ENCODE measurements at regions of chr2 and their contacts with region 1.

Region 1: GRCh38 chr2:156400706-156401678 is 35.2 kb upstream of the GPD2 start:
- DNase-seq: peak; percentile 56 to 82
- ATAC-seq: peak; percentile 82 to 89
- H3K4me3 ChIP-seq: peak overlapping the region; percentile 47
- H3K27ac ChIP-seq: peak overlapping the region; percentile 75 to 89
- H3K4me1 ChIP-seq: peaks cover 32% of the 10 kb centered on the region
- CTCF ChIP-seq: no peak; the same call in 2 of the 3 replicates
- EP300 ChIP-seq: no peak
- POLR2A ChIP-seq: no peak
- RAD21 ChIP-seq: peak in 1 of 2 experiments; percentile 6; a peak in 1 of 5 replicates

Region 2: DNA sequence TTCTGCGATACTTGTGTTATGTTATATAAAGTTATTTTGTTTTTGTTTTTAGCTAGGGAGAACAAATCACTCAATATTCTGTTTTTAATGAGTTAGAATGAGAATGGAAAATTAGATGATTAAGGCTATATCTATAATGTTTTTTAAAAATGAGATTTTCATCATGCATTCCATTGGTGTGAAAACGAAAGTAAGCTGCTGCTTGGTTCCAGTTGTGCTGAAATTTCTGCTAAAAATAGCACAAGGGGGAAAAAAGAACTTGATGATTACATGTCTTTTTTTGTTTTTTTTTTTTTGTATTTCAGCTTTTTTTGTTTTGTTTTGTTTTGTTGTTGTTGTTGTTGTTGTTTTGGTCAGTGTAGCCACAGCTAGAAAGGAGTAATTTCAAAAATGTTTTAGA is 1945.1 kb before region 1 on chr2:
- CTCF ChIA-PET with region 1: no interaction called
- POLR2A ChIA-PET with region 1: interaction called, 10 read pairs
- DNase-seq: no peak
- ATAC-seq: no peak
- H3K4me3 ChIP-seq: no peak overlapping the region
- H3K27ac ChIP-seq: no peak overlapping the region
- H3K4me1 ChIP-seq: 0 out of 3 replicates have a peak, but pooled peaks cover 7% of the 10 kb centered on the region
- CTCF ChIP-seq: no peak
- EP300 ChIP-seq: no peak
- POLR2A ChIP-seq: no peak
- RAD21 ChIP-seq: no peak

Region 3: GRCh38 chr2:156332534-156333273 is 68.3 kb before region 1 on chr2 and contains the start of gene NR4A2:
- CTCF ChIA-PET with region 1: interaction called, 10 read pairs
- POLR2A ChIA-PET with region 1: interaction called, 17 read pairs
- DNase-seq: peak; percentile 80 to 93
- ATAC-seq: peak; percentile 69 to 82
- H3K4me3 ChIP-seq: peak within 1 kb of the TSS; percentile 87
- H3K27ac ChIP-seq: peak within 1 kb of the TSS; percentile 98
- H3K4me1 ChIP-seq: peaks cover 30% of the 10 kb centered on the region
- CTCF ChIP-seq: no peak
- EP300 ChIP-seq: no peak
- POLR2A ChIP-seq: peak; percentile 66
- RAD21 ChIP-seq: no peak
- polyA plus RNA-seq, gene NR4A2: 7.3 and 9.7 TPM in 2 replicates

Region 4: GRCh38 chr2:156341452-156342253 is 59.3 kb before region 1 on chr2:
- CTCF ChIA-PET with region 1: no interaction called
- POLR2A ChIA-PET with region 1: interaction called, 26 read pairs
- DNase-seq: peak; percentile 71 to 95
- ATAC-seq: peak; percentile 82 to 89
- H3K4me3 ChIP-seq: peak overlapping the region; percentile 93
- H3K27ac ChIP-seq: peak overlapping the region; percentile 98 to 99
- H3K4me1 ChIP-seq: peaks cover 47% of the 10 kb centered on the region
- CTCF ChIP-seq: no peak
- EP300 ChIP-seq: no peak
- POLR2A ChIP-seq: peak; percentile 52
- RAD21 ChIP-seq: no peak; a peak in 1 of 5 replicates

Region 5: DNA sequence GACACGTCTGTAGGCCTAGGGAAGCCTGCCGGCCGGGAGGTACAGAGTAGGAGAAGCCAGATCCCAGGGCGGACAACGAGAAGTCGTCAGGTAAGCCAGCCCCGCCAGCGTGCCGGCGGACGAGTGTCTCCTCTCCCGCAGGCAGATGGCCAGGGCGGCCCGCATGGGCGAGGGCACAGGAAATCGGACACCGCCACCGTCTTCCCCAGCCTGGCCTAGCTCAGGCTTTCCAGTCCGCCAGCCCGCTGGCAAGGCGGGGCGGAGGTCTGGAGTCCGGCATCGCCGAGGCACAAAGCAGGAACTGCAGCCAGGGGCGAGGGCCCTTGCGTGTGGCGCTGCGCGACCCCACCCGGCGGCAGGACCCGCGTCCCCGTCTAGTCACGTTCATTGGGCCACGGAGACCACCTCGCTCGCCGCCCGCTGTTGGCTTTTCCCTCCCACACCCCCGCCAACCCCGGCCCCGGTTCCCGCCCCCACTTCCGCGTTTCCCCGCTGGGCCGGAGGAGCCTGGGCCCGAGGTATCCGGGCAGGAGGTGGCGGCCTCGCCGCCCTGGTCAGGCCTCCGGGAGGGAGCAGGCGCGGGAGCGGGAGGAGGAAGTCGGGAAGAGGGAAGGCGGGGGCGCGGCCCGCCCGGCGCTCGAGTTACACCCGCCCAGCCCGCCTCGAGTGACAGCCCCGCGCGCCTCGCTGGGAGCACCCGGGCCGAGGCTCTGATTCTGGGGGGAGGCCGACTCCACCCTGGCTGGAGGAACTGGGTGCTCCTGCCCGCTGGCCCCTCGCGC is 34.9 kb after region 1 on chr2 and contains the start of gene GPD2:
- CTCF ChIA-PET with region 1: no interaction called
- POLR2A ChIA-PET with region 1: interaction called, 13 read pairs
- DNase-seq: peak; percentile 56 to 88
- ATAC-seq: peak; percentile 91 to 95
- H3K4me3 ChIP-seq: peak within 1 kb of the TSS; percentile 69
- H3K27ac ChIP-seq: peak within 1 kb of the TSS; percentile 97 to 99
- H3K4me1 ChIP-seq: peaks cover 48% of the 10 kb centered on the region
- CTCF ChIP-seq: no peak
- EP300 ChIP-seq: no peak
- POLR2A ChIP-seq: peak; percentile 41
- RAD21 ChIP-seq: peak in 1 of 2 experiments; percentile 45; a peak in 3 of 5 replicates
- polyA plus RNA-seq, gene GPD2: 39.6 and 41.9 TPM in 2 replicates